Naive thymus-derived CD4-positive, alpha-beta T cell (primary cell): ENCODE measurements at regions of chr19 and their contacts with region 1.

Region 1: DNA sequence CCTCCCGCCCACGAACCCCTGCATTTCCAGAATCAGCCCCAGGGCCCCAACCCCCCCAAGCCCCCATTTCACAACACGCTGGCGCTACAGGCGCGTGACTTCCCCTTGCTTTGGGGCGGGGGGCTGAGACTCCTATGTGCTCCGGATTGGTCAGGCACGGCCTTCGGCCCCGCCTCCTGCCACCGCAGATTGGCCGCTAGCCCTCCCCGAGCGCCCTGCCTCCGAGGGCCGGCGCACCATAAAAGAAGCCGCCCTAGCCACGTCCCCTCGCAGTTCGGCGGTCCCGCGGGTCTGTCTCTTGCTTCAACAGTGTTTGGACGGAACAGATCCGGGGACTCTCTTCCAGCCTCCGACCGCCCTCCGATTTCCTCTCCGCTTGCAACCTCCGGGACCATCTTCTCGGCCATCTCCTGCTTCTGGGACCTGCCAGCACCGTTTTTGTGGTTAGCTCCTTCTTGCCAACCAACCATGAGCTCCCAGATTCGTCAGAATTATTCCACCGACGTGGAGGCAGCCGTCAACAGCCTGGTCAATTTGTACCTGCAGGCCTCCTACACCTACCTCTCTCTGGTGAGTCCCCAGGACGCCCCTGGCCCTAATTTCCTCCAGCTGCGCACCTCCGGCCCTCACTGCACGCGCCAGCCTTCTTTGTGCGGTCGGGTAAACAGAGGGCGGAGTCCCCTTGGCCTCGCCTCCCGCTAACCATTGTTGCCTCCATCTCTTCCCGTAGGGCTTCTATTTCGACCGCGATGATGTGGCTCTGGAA is at the start of gene FTL:
- DNase-seq: peak; percentile 77 to 93 (median 84)
- ATAC-seq: peak; percentile 85
- H3K4me3 ChIP-seq: peak within 1 kb of the TSS; percentile 86
- H3K4me3 Mint-ChIP-seq: peak within 1 kb of the TSS; percentile 94 to 100 (median 99)
- H3K27ac ChIP-seq: peak within 1 kb of the TSS; percentile 73
- H3K27ac Mint-ChIP-seq: peak within 1 kb of the TSS; percentile 93 to 100 (median 97)
- H3K4me1 ChIP-seq: peaks cover 30 to 37% of the 10 kb centered on the region in 2 donors
- H3K4me1 Mint-ChIP-seq: peaks cover 42 to 69% (median 62%) of the 10 kb centered on the region in 7 donors
- H3K27me3 ChIP-seq: no peaks in the 10 kb centered on the region
- H3K27me3 Mint-ChIP-seq: no peaks in the 10 kb centered on the region
- total RNA-seq, gene FTL: 888 to 1,929 (median 1,286) TPM

Region 2: GRCh38 chr19:48858984-48859710 is 106.1 kb before region 1 on chr19:
- CTCF ChIA-PET with region 1: interaction called, 3 read pairs
- POLR2A ChIA-PET with region 1: interaction called, 4 read pairs
- intact Hi-C with region 1: loop called in 1 of 2 experiments (anchors 2 kb)
- DNase-seq: peak; percentile 54 to 83 (median 77)
- ATAC-seq: peak; percentile 87
- H3K4me3 ChIP-seq: peak overlapping the region; percentile 48
- H3K4me3 Mint-ChIP-seq: peak overlapping the region; percentile 90 to 99 (median 94)
- H3K27ac ChIP-seq: peak overlapping the region; percentile 56
- H3K27ac Mint-ChIP-seq: peak overlapping the region; percentile 7 to 94 (median 91)
- H3K4me1 ChIP-seq: no peaks in the 10 kb centered on the region
- H3K4me1 Mint-ChIP-seq: peaks cover 0 to 8% (median 0%) of the 10 kb centered on the region in 7 donors
- H3K27me3 ChIP-seq: no peaks in the 10 kb centered on the region
- H3K27me3 Mint-ChIP-seq: no peaks in the 10 kb centered on the region

Region 3: GRCh38 chr19:48933382-48933932 is 31.8 kb before region 1 on chr19 and contains the start of gene DHDH:
- CTCF ChIA-PET with region 1: interaction called, 10 read pairs
- POLR2A ChIA-PET with region 1: interaction called, 7 read pairs
- intact Hi-C with region 1: loop called in 1 of 2 experiments (anchors 1 kb)
- DNase-seq: peak; percentile 75 to 90 (median 87)
- ATAC-seq: peak; percentile 98
- H3K4me3 ChIP-seq: peak within 1 kb of the TSS; percentile 50
- H3K4me3 Mint-ChIP-seq: peak within 1 kb of the TSS; percentile 78 to 91 (median 86)
- H3K27ac ChIP-seq: peak within 1 kb of the TSS; percentile 57
- H3K27ac Mint-ChIP-seq: peak within 1 kb of the TSS; percentile 66 to 94 (median 91)
- H3K4me1 ChIP-seq: peaks cover 6 to 7% of the 10 kb centered on the region in 2 donors
- H3K4me1 Mint-ChIP-seq: peaks cover 7 to 17% (median 14%) of the 10 kb centered on the region in 7 donors
- H3K27me3 ChIP-seq: no peaks in the 10 kb centered on the region
- H3K27me3 Mint-ChIP-seq: peaks cover 0 to 16% (median 0%) of the 10 kb centered on the region in 5 donors
- total RNA-seq, gene DHDH: 1.1 to 1.7 (median 1.3) TPM

Region 4: GRCh38 chr19:48954595-48955310 is 10.5 kb before region 1 on chr19 and contains the start of gene BAX:
- CTCF ChIA-PET with region 1: interaction called, 7 read pairs
- POLR2A ChIA-PET with region 1: interaction called, 58 read pairs
- intact Hi-C with region 1: loop called (anchors 1 kb)
- DNase-seq: peak; percentile 59 to 96 (median 71)
- ATAC-seq: peak; percentile 92
- H3K4me3 ChIP-seq: peak within 1 kb of the TSS; percentile 65
- H3K4me3 Mint-ChIP-seq: peak within 1 kb of the TSS; percentile 88 to 95 (median 94)
- H3K27ac ChIP-seq: peak within 1 kb of the TSS; percentile 85
- H3K27ac Mint-ChIP-seq: peak within 1 kb of the TSS; percentile 77 to 94 (median 91)
- H3K4me1 ChIP-seq: peaks cover 12 to 19% of the 10 kb centered on the region in 2 donors
- H3K4me1 Mint-ChIP-seq: peaks cover 26 to 46% (median 38%) of the 10 kb centered on the region in 7 donors
- H3K27me3 ChIP-seq: no peaks in the 10 kb centered on the region
- H3K27me3 Mint-ChIP-seq: peaks cover 0 to 2% (median 0%) of the 10 kb centered on the region in 5 donors
- total RNA-seq, gene BAX: 78.7 to 355 (median 122) TPM

Region 5: GRCh38 chr19:49085020-49085867 is 120.0 kb after region 1 on chr19 and contains the start of gene SNRNP70:
- CTCF ChIA-PET with region 1: no interaction called
- POLR2A ChIA-PET with region 1: no interaction called
- intact Hi-C with region 1: loop called in 1 of 2 experiments (anchors 1 kb)
- DNase-seq: peak; percentile 99 to 100 (median 100)
- ATAC-seq: peak; percentile 97
- H3K4me3 ChIP-seq: peak within 1 kb of the TSS; percentile 72
- H3K4me3 Mint-ChIP-seq: peak within 1 kb of the TSS; percentile 71 to 97 (median 94)
- H3K27ac ChIP-seq: peak within 1 kb of the TSS; percentile 94
- H3K27ac Mint-ChIP-seq: peak within 1 kb of the TSS; percentile 83 to 96 (median 88)
- H3K4me1 ChIP-seq: peaks cover 19% of the 10 kb centered on the region in 2 donors
- H3K4me1 Mint-ChIP-seq: peaks cover 18 to 49% (median 35%) of the 10 kb centered on the region in 7 donors
- H3K27me3 ChIP-seq: no peaks in the 10 kb centered on the region
- H3K27me3 Mint-ChIP-seq: peaks cover 0 to 5% (median 4%) of the 10 kb centered on the region in 5 donors
- total RNA-seq, gene SNRNP70: 243 to 837 (median 449) TPM